Activated CD8-positive, alpha-beta T cell treated with anti-CD3 and anti-CD28 coated beads, Interleukin-2, amount 10 ng/mL, durations not matched to agents 7 days and 5 days (primary cell): ENCODE measurements at regions of chr3 and their contacts with region 1.

Region 1: DNA sequence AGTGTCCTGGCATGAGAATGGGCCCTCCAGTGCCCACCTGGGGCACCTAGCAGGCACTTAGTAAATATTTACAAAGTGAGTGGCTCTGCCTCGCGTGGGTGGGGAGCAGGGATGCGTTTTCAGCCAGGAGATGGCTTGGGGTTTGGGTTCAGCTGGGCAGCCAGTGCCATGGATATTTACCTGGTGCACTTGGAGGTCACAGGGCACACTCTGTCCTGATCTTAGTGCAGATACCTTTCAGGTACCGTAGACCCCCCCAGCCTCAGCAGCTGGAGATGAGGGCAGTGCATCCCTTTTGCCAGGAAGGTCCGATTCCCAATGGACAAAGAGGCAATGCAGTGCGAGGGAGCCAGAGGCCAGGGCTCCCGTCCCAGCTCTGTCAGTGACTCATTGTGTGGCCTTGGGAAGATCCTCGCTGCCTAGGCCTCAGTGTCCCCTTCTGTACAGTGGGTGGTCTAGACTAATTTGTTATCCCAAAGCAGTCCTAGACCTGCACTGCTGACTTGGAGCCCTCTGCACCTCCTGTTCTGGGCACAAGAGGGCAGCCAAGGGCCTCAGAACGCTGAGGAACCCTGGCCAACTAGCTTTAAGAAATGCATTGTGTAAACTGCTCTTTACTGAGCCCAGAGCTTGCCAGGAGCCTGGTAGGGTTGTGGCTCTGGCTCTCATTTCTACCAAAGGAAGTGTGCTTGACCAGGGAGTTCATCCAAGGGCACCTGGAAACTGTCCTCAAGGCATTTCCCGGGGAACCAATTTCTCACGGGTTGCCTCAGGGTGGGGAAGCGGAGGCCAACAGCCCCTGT is 16.0 kb downstream of the HDAC11 start:
- DNase-seq: peak; percentile 84
- ATAC-seq: peak; percentile 83
- H3K4me3 Mint-ChIP-seq: no peak overlapping the region
- H3K27ac Mint-ChIP-seq: no peak overlapping the region
- H3K4me1 Mint-ChIP-seq: peaks cover 9% of the 10 kb centered on the region
- H3K27me3 Mint-ChIP-seq: no peaks in the 10 kb centered on the region

Region 2: GRCh38 chr3:13452490-13453335 is 43.4 kb before region 1 on chr3:
- CTCF ChIA-PET with region 1: no interaction called
- POLR2A ChIA-PET with region 1: no interaction called
- DNase-seq: peak; percentile 71
- ATAC-seq: no peak
- H3K4me3 Mint-ChIP-seq: peak overlapping the region; percentile 89
- H3K27ac Mint-ChIP-seq: peak overlapping the region; percentile 86
- H3K4me1 Mint-ChIP-seq: peaks cover 27% of the 10 kb centered on the region
- H3K27me3 Mint-ChIP-seq: no peaks in the 10 kb centered on the region

Region 3: GRCh38 chr3:13484851-13485590 is 11.1 kb before region 1 on chr3:
- CTCF ChIA-PET with region 1: interaction called, 15 read pairs
- POLR2A ChIA-PET with region 1: no interaction called
- DNase-seq: no peak
- ATAC-seq: no peak
- H3K4me3 Mint-ChIP-seq: no peak overlapping the region
- H3K27ac Mint-ChIP-seq: peak overlapping the region; percentile 71
- H3K4me1 Mint-ChIP-seq: peaks cover 19% of the 10 kb centered on the region
- H3K27me3 Mint-ChIP-seq: peaks cover 3% of the 10 kb centered on the region